PC-3 (cell line): ENCODE measurements at regions of chr13 and their contacts with region 1.

Region 1: GRCh38 chr13:43495724-43496123 is 291.0 kb downstream of the ENOX1 start:
- DNase-seq: no peak
- ATAC-seq: no peak
- H3K4me3 ChIP-seq: no peak overlapping the region
- H3K27ac ChIP-seq: no peak overlapping the region
- H3K4me1 ChIP-seq: peaks cover 7% of the 10 kb centered on the region
- H3K27me3 ChIP-seq: no peaks in the 10 kb centered on the region
- CTCF ChIP-seq: no peak

Region 2: DNA sequence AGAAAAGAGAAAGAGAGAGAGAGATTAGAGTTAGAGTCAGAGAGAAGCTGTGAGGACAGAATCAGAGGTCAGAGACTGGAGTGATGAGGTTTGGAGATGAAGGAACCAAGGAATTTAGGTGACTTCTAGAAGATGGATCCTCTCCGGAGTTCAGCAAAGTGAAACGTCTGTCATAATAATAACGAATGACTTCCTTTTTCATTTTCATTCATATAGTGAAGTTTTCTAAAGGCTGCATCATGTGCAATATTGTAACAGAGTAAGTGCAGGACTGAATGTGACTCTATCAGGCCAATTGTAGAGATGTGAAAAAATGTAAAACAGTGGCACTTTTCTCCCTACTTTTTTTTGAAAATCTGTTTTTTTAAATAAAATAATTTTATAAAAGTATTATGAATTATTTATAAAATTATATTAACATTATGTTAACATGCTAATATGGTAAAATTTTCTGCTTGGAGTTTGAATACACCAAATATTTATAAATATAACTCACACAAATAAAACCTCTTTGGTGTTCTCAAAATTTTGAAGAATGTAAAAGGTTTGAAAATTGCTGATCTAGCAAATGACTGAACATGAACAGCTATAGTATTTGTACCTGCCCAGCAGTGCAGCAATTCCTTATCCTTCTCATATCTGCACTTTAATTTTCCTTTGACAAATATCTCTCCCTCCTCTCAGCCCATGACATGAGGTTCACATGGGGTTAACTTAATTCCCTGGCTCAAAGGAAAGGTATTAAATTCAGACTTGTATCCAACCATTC is 926.0 kb before region 1 on chr13:
- CTCF ChIA-PET with region 1: no interaction called
- POLR2A ChIA-PET with region 1: interaction called, 11 read pairs
- intact Hi-C with region 1: no loop called
- DNase-seq: no peak
- ATAC-seq: no peak
- H3K4me3 ChIP-seq: no peak overlapping the region
- H3K27ac ChIP-seq: no peak overlapping the region
- H3K4me1 ChIP-seq: no peaks in the 10 kb centered on the region
- H3K27me3 ChIP-seq: no peaks in the 10 kb centered on the region
- CTCF ChIP-seq: no peak